ENCODE measurements at regions of chr1 and their contacts with region 1.

Region 1: DNA sequence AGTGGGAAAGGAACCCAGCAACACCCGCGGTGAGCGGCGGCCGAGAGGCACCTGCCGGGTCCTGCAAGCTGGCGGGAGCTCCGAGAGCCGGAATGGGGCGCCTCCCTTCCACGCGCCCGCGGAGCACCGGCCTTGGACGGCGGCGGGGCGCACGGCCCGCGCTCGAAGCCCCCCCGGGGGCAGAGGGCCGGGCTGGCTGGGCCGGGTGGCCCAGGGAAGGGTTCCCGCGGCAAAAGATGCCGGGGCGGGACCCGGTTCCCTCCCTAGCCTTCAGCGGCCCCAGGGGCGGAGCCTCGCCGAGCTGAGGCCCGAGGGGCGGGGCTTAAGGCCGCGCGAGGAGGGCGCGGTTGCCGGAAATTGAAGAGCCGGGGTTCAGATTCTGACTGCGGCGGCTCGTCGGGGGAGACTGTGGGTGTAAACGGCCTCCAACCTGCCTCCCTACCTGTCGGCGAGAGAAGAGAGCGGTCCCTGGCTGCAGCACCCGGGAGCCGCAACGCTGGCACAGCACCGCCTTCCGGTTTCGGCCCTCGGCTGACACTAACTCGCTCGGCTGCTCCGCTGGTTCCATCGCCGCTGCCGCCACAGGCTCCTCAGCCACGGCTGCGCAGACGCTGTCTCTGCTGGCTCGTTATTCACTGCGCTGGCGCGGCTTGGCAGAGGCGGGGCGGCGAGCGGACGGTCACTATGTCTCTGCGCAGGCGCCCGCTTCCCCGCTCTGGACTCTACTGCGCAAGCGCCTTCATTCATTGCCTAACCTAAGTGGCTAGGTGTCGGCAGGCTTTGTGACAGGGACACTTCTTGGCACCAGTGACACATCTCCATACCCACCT is at the start of gene RABIF:
- DNase-seq: peak; percentile 98
- H3K4me3 ChIP-seq: peak within 1 kb of the TSS; percentile 69 to 82 (median 75)
- H3K27ac ChIP-seq: peak within 1 kb of the TSS; percentile 87 to 98 (median 92)
- H3K4me1 ChIP-seq: peaks cover 0 to 17% (median 10%) of the 10 kb centered on the region in 4 donors
- H3K27me3 ChIP-seq: no peaks in the 10 kb centered on the region
- CTCF ChIP-seq: no peak
- EP300 ChIP-seq: no peak
- POLR2A ChIP-seq: peak; percentile 72 to 92
- total RNA-seq, gene RABIF: 3.6 to 7.3 (median 4.8) TPM

Region 2: GRCh38 chr1:202825759-202826158 is 63.0 kb before region 1 on chr1:
- intact Hi-C with region 1: no loop called
- DNase-seq: no peak
- H3K4me3 ChIP-seq: no peak overlapping the region
- H3K27ac ChIP-seq: no peak overlapping the region
- H3K4me1 ChIP-seq: no peaks in the 10 kb centered on the region
- H3K27me3 ChIP-seq: no peaks in the 10 kb centered on the region
- CTCF ChIP-seq: no peak
- EP300 ChIP-seq: no peak
- POLR2A ChIP-seq: no peak

Region 3: DNA sequence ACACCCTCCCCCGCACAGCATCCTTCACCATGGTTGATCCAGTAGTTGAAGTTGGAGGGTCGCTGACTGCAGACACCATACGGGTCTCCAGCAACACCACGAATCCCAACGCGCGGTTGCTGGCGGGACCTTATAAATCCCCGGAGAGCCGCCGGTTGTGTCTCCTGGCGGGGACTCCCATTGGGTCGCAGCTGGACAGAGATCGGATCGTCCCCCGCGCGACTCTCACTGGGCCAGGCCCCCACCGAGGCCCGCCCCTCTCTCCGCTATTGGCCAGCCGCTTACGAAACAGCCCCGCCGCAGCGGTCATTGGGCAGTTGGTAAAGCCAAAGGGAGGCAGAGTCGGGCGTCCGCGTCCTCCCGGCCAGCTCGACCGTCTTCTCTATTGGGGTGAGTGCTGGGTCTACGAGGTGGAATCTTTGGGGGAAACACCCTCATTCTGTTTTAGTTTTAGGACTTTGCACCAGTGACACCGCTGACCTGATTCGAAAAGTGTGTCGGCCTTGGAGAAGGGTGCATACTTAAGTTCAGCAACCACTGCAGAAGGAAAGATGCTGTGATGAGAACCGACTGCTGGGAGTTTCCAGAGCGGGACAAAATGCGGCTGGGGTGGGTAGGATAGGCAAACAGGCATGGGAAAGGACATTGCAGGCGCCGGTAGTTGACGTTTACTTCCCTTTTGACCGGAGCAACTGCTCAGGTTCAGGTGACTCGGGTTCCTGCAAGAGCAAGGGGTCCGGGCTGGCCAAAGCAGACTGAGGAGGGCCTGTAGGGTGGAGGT is 27.1 kb before region 1 on chr1:
- intact Hi-C with region 1: loop called (anchors 2 kb)
- DNase-seq: peak; percentile 96
- H3K4me3 ChIP-seq: peak overlapping the region; percentile 53 to 89 (median 69)
- H3K27ac ChIP-seq: peak overlapping the region; percentile 54 to 74 (median 66)
- H3K4me1 ChIP-seq: peaks cover 0 to 13% (median 13%) of the 10 kb centered on the region in 4 donors
- H3K27me3 ChIP-seq: no peaks in the 10 kb centered on the region
- CTCF ChIP-seq: no peak
- EP300 ChIP-seq: no peak
- POLR2A ChIP-seq: peak in 1 of 2 donors; percentile 23

Region 4: GRCh38 chr1:202873026-202873425 is 15.7 kb before region 1 on chr1:
- intact Hi-C with region 1: no loop called
- DNase-seq: no peak
- H3K4me3 ChIP-seq: no peak overlapping the region
- H3K27ac ChIP-seq: no peak overlapping the region
- H3K4me1 ChIP-seq: no peaks in the 10 kb centered on the region
- H3K27me3 ChIP-seq: no peaks in the 10 kb centered on the region
- CTCF ChIP-seq: no peak
- EP300 ChIP-seq: no peak
- POLR2A ChIP-seq: no peak

Measured in sigmoid colon (tissue), 7 donors.